ENCODE measurements at regions of chr3 and their contacts with region 1.

Region 1: GRCh38 chr3:184345317-184346144 is 8.1 kb downstream of the FAM131A start:
- DNase-seq: no peak
- H3K4me3 ChIP-seq: no peak overlapping the region
- CTCF ChIP-seq: peak; percentile 50

Region 2: DNA sequence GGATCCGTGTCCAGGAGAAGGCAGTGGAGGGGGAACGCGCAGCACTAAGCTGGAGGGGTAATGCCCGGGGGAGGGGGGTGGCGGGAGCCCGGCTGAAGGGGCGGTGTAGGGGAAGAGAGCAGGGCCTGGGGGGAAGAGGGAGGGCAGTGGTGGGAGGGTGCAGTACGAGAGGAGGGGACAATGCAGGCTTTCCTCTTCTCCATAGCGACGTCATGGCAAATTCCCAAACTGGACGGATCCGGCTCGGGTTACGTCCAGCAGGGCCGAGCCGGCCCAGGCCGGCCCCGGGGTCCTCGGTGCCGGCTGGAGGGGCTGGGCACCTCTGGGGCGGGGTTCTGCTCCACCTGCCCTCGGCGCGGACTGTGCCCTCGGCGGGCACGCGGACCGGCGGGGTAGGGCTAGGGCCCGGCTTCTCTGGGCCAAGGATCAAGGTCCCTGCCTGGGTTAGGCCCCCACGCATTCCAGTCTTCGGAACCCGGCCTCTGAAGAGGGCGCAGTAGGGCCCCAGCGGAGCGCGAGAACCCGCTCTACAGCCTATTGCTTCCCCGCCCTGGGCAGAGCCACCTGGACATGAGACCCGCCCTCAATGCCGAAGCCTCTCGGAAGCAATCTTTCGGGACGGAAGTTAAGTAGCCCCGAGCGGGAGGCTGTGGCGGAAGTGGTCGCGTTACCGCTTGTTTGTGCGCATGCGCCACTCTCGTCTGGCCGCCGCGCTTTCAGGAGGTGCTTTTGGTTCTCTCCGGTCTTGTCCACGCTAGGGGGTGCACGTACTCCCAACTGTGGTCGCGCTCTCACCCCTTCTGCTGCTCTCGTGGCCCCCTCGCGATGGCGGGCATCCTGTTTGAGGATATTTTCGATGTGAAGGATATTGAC is 17.4 kb after region 1 on chr3:
- CTCF ChIA-PET with region 1: interaction called, 20 read pairs
- POLR2A ChIA-PET with region 1: interaction called, 4 read pairs
- DNase-seq: peak; percentile 83
- H3K4me3 ChIP-seq: peak overlapping the region; percentile 80
- CTCF ChIP-seq: peak; percentile 86

Region 3: GRCh38 chr3:184632551-184633236 is 287.2 kb after region 1 on chr3:
- CTCF ChIA-PET with region 1: no interaction called
- POLR2A ChIA-PET with region 1: no interaction called
- DNase-seq: no peak
- H3K4me3 ChIP-seq: no peak overlapping the region
- CTCF ChIP-seq: no peak

Measured in AG04449 (cell line).